ENCODE measurements at regions of chr22 and their contacts with region 1.

Region 1: GRCh38 chr22:40679964-40680818 is 907 bp downstream of the MCHR1 start:
- DNase-seq: no peak
- H3K4me3 ChIP-seq: no peak overlapping the region
- H3K27ac ChIP-seq: no peak overlapping the region
- H3K4me1 ChIP-seq: no peaks in the 10 kb centered on the region
- H3K27me3 ChIP-seq: no peaks in the 10 kb centered on the region
- CTCF ChIP-seq: no peak
- POLR2A ChIP-seq: no peak

Region 2: GRCh38 chr22:40426594-40427333 is 253.4 kb before region 1 on chr22:
- intact Hi-C with region 1: no loop called
- DNase-seq: no peak
- H3K4me3 ChIP-seq: no peak overlapping the region
- H3K27ac ChIP-seq: no peak overlapping the region
- H3K4me1 ChIP-seq: no peaks in the 10 kb centered on the region
- H3K27me3 ChIP-seq: no peaks in the 10 kb centered on the region
- CTCF ChIP-seq: no peak
- POLR2A ChIP-seq: no peak

Region 3: GRCh38 chr22:40764763-40765441 is 84.7 kb after region 1 on chr22:
- intact Hi-C with region 1: loop called (anchors 5 kb)
- DNase-seq: no peak
- H3K4me3 ChIP-seq: no peak overlapping the region
- H3K27ac ChIP-seq: no peak overlapping the region
- H3K4me1 ChIP-seq: no peaks in the 10 kb centered on the region
- H3K27me3 ChIP-seq: no peaks in the 10 kb centered on the region
- CTCF ChIP-seq: no peak
- POLR2A ChIP-seq: no peak

Region 4: GRCh38 chr22:40898850-40899357 is 218.7 kb after region 1 on chr22:
- intact Hi-C with region 1: loop called (anchors 10 kb)
- DNase-seq: no peak
- H3K4me3 ChIP-seq: no peak overlapping the region
- H3K27ac ChIP-seq: no peak overlapping the region
- H3K4me1 ChIP-seq: no peaks in the 10 kb centered on the region
- H3K27me3 ChIP-seq: no peaks in the 10 kb centered on the region
- CTCF ChIP-seq: peak in 2 of 4 experiments; percentile 38 to 50
- POLR2A ChIP-seq: no peak